ENCODE measurements at regions of chr1 and their contacts with region 1.

Region 1: DNA sequence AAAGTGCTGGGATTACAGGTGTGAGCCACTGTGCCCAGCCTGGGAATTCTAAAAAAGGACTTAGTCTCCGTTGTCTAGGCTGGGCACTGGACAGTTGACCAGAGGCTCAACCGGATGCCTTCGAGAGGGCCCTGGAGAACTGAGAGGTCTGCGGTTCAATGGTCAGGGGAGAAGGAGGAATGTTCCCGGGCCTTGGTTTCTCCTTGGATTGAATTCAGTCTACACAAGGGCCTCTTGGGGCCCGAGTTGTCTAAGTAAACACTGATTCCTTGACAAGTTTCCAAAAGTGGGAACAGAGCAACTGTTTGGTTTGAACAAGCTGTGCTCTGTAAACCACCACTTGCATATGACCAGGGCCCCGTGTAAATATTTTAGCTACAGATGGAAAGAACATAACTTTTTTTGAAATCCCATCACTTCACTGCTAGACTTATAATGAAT is 29.1 kb upstream of the CAPZB start:
- DNase-seq: peak; percentile 77
- ATAC-seq: peak; percentile 88
- H3K4me3 ChIP-seq: no peak overlapping the region
- H3K27ac ChIP-seq: peak overlapping the region; percentile 77; the same call in 1 of the 2 replicates
- H3K4me1 ChIP-seq: peaks cover 5% of the 10 kb centered on the region; the same call in 1 of the 2 replicates
- H3K27me3 ChIP-seq: peaks cover 3% of the 10 kb centered on the region; the same call in 1 of the 2 replicates
- CTCF ChIP-seq: no peak
- POLR2A ChIP-seq: no peak
- RAD21 ChIP-seq: no peak

Region 2: GRCh38 chr1:19559641-19560040 is 45.2 kb after region 1 on chr1:
- CTCF ChIA-PET with region 1: no interaction called
- POLR2A ChIA-PET with region 1: no interaction called
- dilution Hi-C with region 1: no loop called
- in situ Hi-C with region 1: no loop called
- intact Hi-C with region 1: loop called (anchors 5 kb)
- DNase-seq: peak; percentile 82
- ATAC-seq: peak; percentile 68
- H3K4me3 ChIP-seq: no peak overlapping the region
- H3K27ac ChIP-seq: no peak overlapping the region
- H3K4me1 ChIP-seq: peaks cover 5% of the 10 kb centered on the region; the same call in 1 of the 2 replicates
- H3K27me3 ChIP-seq: no peaks in the 10 kb centered on the region
- CTCF ChIP-seq: no peak
- POLR2A ChIP-seq: no peak
- RAD21 ChIP-seq: no peak

Measured in IMR-90 (cell line).